ENCODE measurements at regions of chr13 and their contacts with region 1.

Region 1: GRCh38 chr13:76886292-76887075 is at the start of gene KCTD12:
- DNase-seq: peak; percentile 72
- H3K4me3 Mint-ChIP-seq: peak within 1 kb of the TSS; percentile 84
- H3K27ac Mint-ChIP-seq: peak within 1 kb of the TSS; percentile 71
- H3K4me1 Mint-ChIP-seq: peaks cover 31% of the 10 kb centered on the region
- H3K27me3 Mint-ChIP-seq: peaks cover 38% of the 10 kb centered on the region
- total RNA-seq, gene KCTD12: 7.1 to 7.3 TPM

Region 2: DNA sequence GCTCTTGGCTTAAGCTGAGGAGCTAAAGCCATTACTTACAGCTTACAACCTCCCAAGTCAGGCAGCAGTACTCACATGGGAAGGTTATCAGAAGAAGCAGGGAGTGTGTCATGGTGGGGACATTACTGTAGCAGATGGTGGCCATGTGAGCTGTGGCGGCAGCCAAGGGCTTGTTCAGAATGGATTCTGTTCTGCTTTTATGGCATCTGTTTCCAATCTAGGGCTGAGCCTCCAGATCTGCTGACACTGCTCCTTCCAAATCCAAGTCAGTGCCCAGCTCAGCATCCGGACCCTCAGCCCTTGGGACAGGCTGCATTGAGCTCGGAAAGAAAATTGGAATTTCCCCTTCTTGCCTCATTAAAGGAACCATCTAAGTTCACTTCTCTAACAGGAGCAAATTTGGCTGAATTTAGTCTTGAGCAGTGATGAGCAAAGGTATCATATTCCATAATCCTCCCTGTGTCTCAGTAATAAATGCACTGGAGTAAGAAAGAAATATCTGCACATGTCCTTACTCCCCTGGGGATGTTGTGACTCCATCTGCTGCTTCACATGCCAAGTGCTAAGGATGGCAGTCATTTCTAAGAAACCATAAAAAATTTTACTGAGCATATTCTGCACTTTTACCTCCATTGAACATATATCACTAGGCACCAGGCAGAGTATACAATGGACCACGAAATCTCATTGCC is 74.1 kb before region 1 on chr13:
- CTCF ChIA-PET with region 1: no interaction called
- POLR2A ChIA-PET with region 1: no interaction called
- DNase-seq: no peak
- H3K4me3 Mint-ChIP-seq: no peak overlapping the region
- H3K27ac Mint-ChIP-seq: no peak overlapping the region
- H3K4me1 Mint-ChIP-seq: no peaks in the 10 kb centered on the region
- H3K27me3 Mint-ChIP-seq: peaks cover 31% of the 10 kb centered on the region

Region 3: DNA sequence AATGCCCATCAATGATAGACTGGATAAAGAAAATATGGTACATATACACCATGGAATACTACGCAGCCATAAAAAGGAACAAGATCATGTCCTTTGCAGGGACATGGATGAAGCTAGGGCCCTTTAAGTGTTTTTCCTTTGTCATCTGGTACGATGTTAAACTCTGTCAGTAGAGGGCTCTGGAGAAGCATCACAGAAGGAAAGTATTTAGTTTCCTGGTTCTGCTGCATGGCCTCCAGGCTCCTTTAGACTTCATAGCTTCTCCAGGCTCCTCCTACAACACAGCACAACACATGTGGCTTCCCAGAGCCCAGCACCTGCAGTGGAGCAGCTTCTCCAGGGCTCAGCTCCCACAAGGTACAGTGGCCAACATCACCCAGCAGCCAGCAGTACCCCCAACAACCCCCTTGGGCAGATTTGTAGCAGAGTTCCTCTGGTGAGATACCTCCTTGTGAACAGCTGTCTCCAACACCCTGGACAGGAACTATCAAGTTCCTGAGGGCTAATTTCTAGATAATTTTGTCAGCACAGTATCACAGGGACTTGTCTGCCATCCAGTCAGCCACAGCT is 63.7 kb before region 1 on chr13:
- CTCF ChIA-PET with region 1: interaction called, 10 read pairs
- POLR2A ChIA-PET with region 1: interaction called, 3 read pairs
- DNase-seq: no peak
- H3K4me3 Mint-ChIP-seq: no peak overlapping the region
- H3K27ac Mint-ChIP-seq: no peak overlapping the region
- H3K4me1 Mint-ChIP-seq: no peaks in the 10 kb centered on the region
- H3K27me3 Mint-ChIP-seq: peaks cover 9% of the 10 kb centered on the region

Region 4: DNA sequence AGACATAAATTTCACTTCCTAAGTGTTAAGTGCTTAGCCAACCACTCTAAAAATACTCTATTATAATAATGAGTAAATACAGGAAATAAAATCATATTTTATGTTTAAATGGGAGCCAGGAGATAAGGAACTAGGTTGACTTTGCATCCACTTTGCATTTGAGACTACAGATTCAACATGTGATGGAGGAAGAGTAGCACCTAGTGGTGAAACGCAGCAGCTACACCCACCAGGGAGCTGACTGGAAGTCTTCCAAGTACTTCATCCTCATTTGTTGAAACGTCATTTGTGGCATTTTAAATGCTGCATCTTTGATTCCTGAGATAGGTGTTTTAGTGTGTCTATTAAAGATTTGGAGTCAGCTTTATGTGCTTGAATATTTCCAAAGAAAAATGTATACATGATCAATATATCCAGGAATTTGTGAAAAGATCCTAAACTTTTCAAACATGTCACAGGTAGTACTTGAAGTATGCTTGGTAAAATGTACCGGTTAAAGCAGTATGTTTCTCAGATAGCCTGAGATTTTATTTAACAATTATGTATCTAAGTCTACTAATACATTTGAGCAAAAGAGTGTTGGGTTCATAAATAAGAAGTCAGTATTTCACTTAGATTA is 17.2 kb after region 1 on chr13:
- CTCF ChIA-PET with region 1: interaction called, 19 read pairs
- POLR2A ChIA-PET with region 1: interaction called, 6 read pairs
- DNase-seq: peak; percentile 73
- H3K4me3 Mint-ChIP-seq: no peak overlapping the region
- H3K27ac Mint-ChIP-seq: no peak overlapping the region
- H3K4me1 Mint-ChIP-seq: no peaks in the 10 kb centered on the region
- H3K27me3 Mint-ChIP-seq: peaks cover 31% of the 10 kb centered on the region

Region 5: DNA sequence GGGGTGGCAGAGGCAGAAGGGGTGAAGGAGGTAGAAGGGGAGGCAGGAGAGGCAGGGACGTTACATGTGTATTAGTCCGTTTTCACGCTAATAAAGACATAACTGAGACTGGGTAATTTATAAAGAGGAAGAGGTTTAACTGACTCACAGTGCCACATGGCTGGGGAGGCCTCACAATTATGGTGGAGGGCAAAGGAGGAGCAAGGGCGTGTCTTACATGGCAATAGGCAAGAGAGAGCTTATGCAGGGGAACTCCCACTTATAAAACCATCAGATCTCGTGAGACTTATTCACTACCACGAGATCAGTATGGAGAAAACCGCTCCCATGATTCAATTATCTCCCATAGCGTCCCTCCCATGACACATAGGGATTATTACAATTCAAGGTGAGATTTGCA is 42.8 kb after region 1 on chr13:
- CTCF ChIA-PET with region 1: no interaction called
- POLR2A ChIA-PET with region 1: no interaction called
- DNase-seq: no peak
- H3K4me3 Mint-ChIP-seq: no peak overlapping the region
- H3K27ac Mint-ChIP-seq: no peak overlapping the region
- H3K4me1 Mint-ChIP-seq: no peaks in the 10 kb centered on the region
- H3K27me3 Mint-ChIP-seq: peaks cover 9% of the 10 kb centered on the region